ENCODE measurements at regions of chr12 and their contacts with region 1.

Region 1: DNA sequence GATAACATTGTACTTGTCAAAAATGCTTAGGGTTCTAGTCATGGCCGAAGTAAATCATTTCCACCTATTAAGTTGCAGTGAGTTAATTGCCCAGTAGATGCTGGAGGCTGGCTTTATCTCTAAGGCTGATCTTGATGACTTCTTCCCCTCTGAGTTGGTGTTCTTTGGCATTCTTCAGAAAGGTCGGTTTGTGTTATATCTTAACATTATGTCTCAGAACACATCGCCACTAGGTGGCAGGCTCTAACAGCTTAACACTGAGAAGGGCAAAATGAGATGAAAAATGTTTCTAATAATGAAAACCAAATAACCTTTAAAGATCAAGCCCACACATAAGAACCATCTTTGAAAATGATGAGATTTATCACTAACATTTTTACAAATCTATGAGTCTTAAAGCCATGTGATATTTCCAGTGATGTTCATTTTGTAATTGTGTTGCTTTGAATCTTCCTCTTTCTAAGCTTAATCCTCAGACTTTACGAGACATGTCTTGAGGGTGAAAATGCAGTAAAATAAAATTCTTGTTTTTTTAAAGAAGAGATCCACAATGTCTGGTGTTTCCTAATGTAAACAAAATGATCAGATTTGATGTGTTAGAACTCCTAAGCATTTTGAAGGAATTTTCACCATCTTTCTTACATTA is 28.6 kb downstream of the SUDS3 start:
- DNase-seq: peak; percentile 53 to 80
- ATAC-seq: peak; percentile 52
- H3K4me3 ChIP-seq: no peak overlapping the region
- H3K27ac ChIP-seq: no peak overlapping the region
- H3K4me1 ChIP-seq: peaks cover 0 to 2% of the 10 kb centered on the region in 2 donors
- H3K27me3 ChIP-seq: no peaks in the 10 kb centered on the region

Region 2: GRCh38 chr12:118359541-118359915 is 45.5 kb before region 1 on chr12:
- intact Hi-C with region 1: no loop called
- DNase-seq: no peak
- ATAC-seq: no peak
- H3K4me3 ChIP-seq: no peak overlapping the region
- H3K27ac ChIP-seq: no peak overlapping the region
- H3K4me1 ChIP-seq: no peaks in the 10 kb centered on the region
- H3K27me3 ChIP-seq: no peaks in the 10 kb centered on the region

Region 3: GRCh38 chr12:118513611-118514010 is 108.6 kb after region 1 on chr12:
- intact Hi-C with region 1: no loop called
- DNase-seq: no peak
- ATAC-seq: no peak
- H3K4me3 ChIP-seq: no peak overlapping the region
- H3K27ac ChIP-seq: no peak overlapping the region
- H3K4me1 ChIP-seq: no peaks in the 10 kb centered on the region
- H3K27me3 ChIP-seq: no peaks in the 10 kb centered on the region

Region 4: GRCh38 chr12:118625050-118625675 is 220.2 kb after region 1 on chr12:
- intact Hi-C with region 1: loop called (anchors 5 to 10 kb)
- DNase-seq: no peak
- ATAC-seq: no peak
- H3K4me3 ChIP-seq: no peak overlapping the region
- H3K27ac ChIP-seq: no peak overlapping the region
- H3K4me1 ChIP-seq: no peaks in the 10 kb centered on the region
- H3K27me3 ChIP-seq: no peaks in the 10 kb centered on the region

Region 5: DNA sequence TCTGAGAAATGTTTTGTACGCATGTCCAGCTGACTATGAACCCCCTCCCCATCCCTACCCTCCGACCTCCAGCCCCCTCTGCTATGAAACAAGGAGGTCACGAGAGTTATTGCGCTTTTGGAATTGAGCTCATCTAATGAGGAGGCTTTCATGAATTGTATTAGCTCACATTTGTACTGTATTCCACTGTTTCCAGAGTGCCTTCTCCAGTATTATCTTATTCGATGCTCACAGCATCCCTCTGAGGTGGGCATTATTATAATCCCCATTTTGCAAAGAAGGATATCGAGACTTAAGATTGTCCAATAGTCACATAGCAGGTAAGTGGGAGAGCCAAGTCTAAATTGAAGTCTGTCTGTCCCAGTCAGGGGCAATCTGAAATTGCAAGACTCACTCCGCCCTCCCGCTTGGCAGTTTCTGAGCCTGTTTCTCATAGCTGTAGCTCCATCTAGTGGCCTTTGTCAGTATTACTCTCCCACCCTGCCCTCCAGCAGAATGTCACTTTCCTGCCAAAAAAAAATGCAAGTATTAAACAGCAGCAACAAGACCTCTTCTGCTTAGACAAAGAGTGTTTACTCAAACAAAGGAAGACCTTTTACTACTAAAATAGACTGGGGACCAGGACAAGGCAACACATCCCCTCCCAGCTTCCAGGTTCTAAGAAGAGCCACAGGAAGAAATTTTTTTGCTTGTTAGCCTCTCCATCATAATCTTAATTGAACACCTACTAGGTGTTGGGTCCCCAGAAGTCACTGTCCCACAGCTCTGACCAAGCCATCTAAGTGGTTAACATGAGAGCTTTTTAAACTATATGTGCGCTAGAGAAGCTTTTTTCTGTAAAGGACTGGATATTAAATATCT is 1140.0 kb after region 1 on chr12:
- intact Hi-C with region 1: loop called in 1 of 2 experiments (anchors 5 kb)
- DNase-seq: peak in 1 of 2 donors; percentile 61
- ATAC-seq: peak; percentile 74
- H3K4me3 ChIP-seq: no peak overlapping the region
- H3K27ac ChIP-seq: no peak overlapping the region
- H3K4me1 ChIP-seq: no peaks in the 10 kb centered on the region
- H3K27me3 ChIP-seq: no peaks in the 10 kb centered on the region

Measured in aorta (tissue), 5 donors.